Activated CD4-positive, alpha-beta T cell treated with anti-CD3 and anti-CD28 coated beads for 36 hours (primary cell): ENCODE measurements at regions of chr13 and their contacts with region 1.

Region 1: DNA sequence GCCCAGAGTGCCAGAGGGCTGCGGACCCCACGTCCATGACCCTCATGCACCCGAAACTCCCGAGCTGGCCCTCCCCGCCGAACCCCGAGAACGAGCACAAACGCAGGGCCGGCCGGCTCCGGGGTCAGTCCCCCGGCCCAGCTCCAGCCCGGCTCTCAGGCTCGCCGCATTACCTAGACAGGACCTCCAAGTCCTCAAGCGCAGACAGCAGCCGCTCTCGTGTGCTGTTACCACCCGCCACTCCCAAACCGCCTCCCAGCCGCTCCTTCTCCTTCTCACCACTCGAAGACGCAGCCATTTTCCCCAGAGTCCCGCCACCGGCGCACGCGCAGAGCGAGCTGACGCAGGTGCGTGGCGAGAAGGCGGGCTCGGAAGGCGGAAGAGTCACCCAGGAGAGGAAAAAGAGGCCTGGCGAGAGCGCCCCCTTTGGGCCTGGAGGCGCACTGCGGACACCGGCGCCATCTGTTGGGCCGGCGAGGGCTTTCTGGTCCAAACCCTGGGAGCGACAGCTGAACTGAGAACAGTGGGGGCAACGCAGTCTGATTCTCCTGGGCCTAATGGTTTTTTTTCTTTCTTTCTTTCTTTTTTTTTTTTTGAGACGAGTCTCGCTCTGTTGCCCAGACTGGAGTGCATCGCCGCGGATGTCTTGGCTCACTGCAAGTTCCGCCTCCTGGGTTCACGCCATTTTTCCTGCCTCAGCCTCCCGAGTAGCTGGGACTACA is at the start of gene MED4:
- DNase-seq: peak; percentile 98
- ATAC-seq: peak; percentile 97
- H3K4me3 Mint-ChIP-seq: peak within 1 kb of the TSS; percentile 97
- H3K27ac Mint-ChIP-seq: peak within 1 kb of the TSS; percentile 92
- H3K4me1 Mint-ChIP-seq: peaks cover 29% of the 10 kb centered on the region
- H3K27me3 Mint-ChIP-seq: no peaks in the 10 kb centered on the region
- total RNA-seq, gene MED4: 53.5 to 62.7 TPM

Region 2: GRCh38 chr13:46796515-46797474 is 1298.1 kb before region 1 on chr13 and contains the start of gene ESD:
- CTCF ChIA-PET with region 1: no interaction called
- POLR2A ChIA-PET with region 1: no interaction called
- intact Hi-C with region 1: loop called in 1 of 2 experiments (anchors 2 kb)
- DNase-seq: peak; percentile 97
- ATAC-seq: peak; percentile 95
- H3K4me3 Mint-ChIP-seq: peak within 1 kb of the TSS; percentile 98
- H3K27ac Mint-ChIP-seq: peak within 1 kb of the TSS; percentile 98
- H3K4me1 Mint-ChIP-seq: peaks cover 38% of the 10 kb centered on the region
- H3K27me3 Mint-ChIP-seq: no peaks in the 10 kb centered on the region
- total RNA-seq, gene ESD: 150 to 162 TPM

Region 3: DNA sequence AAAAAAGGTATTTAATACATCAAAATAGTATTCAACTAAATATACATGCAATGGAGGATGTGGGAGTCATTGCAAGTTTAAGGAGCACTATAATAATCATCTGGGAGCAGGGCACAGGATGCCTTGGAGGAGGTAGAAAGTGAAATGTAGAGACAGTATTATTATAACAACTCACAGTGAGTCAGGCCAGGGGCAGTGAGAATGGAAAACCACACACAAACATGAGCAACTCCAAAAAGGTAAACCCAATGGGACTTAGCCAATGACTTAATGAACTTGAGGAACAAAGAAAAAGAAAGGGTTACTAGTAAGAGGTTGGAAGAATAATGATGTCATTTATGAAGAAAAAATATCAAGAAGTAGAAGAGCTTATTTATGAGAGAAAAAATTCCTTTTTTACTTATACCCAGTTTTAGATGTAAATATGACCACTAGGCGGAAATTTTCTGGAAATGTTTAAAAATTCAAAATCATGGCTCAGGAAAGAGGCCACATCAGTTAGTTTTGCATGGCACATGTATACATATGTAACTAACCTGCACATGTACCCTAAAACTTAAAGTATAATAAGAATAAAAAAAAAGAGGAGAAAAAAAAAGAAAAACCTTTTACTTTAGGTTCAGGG is 483.2 kb before region 1 on chr13:
- CTCF ChIA-PET with region 1: no interaction called
- POLR2A ChIA-PET with region 1: no interaction called
- intact Hi-C with region 1: no loop called
- DNase-seq: no peak
- ATAC-seq: no peak
- H3K4me3 Mint-ChIP-seq: no peak overlapping the region
- H3K27ac Mint-ChIP-seq: no peak overlapping the region
- H3K4me1 Mint-ChIP-seq: no peaks in the 10 kb centered on the region
- H3K27me3 Mint-ChIP-seq: no peaks in the 10 kb centered on the region

Region 4: DNA sequence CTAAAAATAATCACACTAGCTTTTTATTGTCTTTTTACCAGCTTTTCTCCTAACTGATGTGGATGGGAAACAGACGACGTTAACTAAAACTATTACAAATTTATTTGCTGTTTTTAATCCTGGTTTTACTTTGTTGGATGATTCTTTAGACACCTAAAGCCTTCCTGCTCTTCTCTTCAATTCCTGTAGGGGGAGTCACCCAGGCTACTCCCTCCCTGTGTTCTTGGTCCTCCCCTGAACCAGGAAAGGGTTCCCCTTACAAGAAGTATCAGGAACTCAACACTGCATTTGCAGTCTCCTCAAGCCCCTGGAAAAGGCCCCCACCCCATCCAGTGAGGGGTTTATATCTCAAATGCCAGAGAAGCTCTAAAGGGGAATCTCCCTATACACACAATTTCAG is 300.0 kb before region 1 on chr13:
- CTCF ChIA-PET with region 1: no interaction called
- POLR2A ChIA-PET with region 1: no interaction called
- intact Hi-C with region 1: loop called in 1 of 2 experiments (anchors 10 kb)
- DNase-seq: no peak
- ATAC-seq: no peak
- H3K4me3 Mint-ChIP-seq: no peak overlapping the region
- H3K27ac Mint-ChIP-seq: no peak overlapping the region
- H3K4me1 Mint-ChIP-seq: no peaks in the 10 kb centered on the region
- H3K27me3 Mint-ChIP-seq: peaks cover 3% of the 10 kb centered on the region

Region 5: GRCh38 chr13:48000778-48001628 is 93.9 kb before region 1 on chr13 and contains the start of gene SUCLA2:
- CTCF ChIA-PET with region 1: interaction called, 3 read pairs
- POLR2A ChIA-PET with region 1: no interaction called
- intact Hi-C with region 1: loop called in 1 of 2 experiments (anchors 1 kb)
- DNase-seq: peak; percentile 96
- ATAC-seq: peak; percentile 100
- H3K4me3 Mint-ChIP-seq: peak within 1 kb of the TSS; percentile 85
- H3K27ac Mint-ChIP-seq: peak within 1 kb of the TSS; percentile 95
- H3K4me1 Mint-ChIP-seq: peaks cover 31% of the 10 kb centered on the region
- H3K27me3 Mint-ChIP-seq: no peaks in the 10 kb centered on the region
- total RNA-seq, gene SUCLA2: 34.9 to 44.6 TPM

Region 6: DNA sequence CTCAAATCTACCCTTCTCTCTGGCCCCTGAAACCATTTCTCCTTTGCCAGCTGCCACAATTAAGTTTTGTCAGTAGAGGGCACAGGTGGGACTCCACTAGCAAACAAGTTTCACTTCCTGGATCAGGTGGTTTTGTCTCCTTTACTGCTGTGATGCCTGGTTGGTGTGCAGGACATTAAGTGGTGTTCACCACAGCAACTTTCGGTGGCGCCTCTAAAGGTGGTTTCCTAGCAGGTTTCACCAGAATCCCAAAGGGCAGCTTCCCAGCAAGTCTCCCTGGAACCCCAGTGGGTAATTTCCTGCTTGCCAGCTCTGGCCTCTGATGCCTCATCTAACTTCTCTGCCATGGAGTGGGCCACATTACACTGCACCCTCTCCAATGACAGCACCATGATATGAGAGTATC is 16.7 kb before region 1 on chr13:
- CTCF ChIA-PET with region 1: interaction called, 12 read pairs
- POLR2A ChIA-PET with region 1: no interaction called
- intact Hi-C with region 1: no loop called
- DNase-seq: peak; percentile 40
- ATAC-seq: peak; percentile 87
- H3K4me3 Mint-ChIP-seq: no peak overlapping the region
- H3K27ac Mint-ChIP-seq: no peak overlapping the region
- H3K4me1 Mint-ChIP-seq: peaks cover 7% of the 10 kb centered on the region
- H3K27me3 Mint-ChIP-seq: no peaks in the 10 kb centered on the region

Region 7: GRCh38 chr13:48303359-48304142 is 208.6 kb after region 1 on chr13 and contains the start of gene RB1:
- CTCF ChIA-PET with region 1: no interaction called
- POLR2A ChIA-PET with region 1: interaction called, 3 read pairs
- intact Hi-C with region 1: loop called in 1 of 2 experiments (anchors 1 kb)
- DNase-seq: peak; percentile 94
- ATAC-seq: peak; percentile 81
- H3K4me3 Mint-ChIP-seq: peak within 1 kb of the TSS; percentile 81
- H3K27ac Mint-ChIP-seq: peak within 1 kb of the TSS; percentile 99
- H3K4me1 Mint-ChIP-seq: peaks cover 27% of the 10 kb centered on the region
- H3K27me3 Mint-ChIP-seq: no peaks in the 10 kb centered on the region
- total RNA-seq, gene RB1: 26.9 to 32.8 TPM

Region 8: GRCh38 chr13:48400850-48401291 is 305.9 kb after region 1 on chr13:
- CTCF ChIA-PET with region 1: no interaction called
- POLR2A ChIA-PET with region 1: no interaction called
- intact Hi-C with region 1: no loop called
- DNase-seq: no peak
- ATAC-seq: peak; percentile 21
- H3K4me3 Mint-ChIP-seq: no peak overlapping the region
- H3K27ac Mint-ChIP-seq: peak overlapping the region; percentile 1
- H3K4me1 Mint-ChIP-seq: peaks cover 53% of the 10 kb centered on the region
- H3K27me3 Mint-ChIP-seq: no peaks in the 10 kb centered on the region